Motor neuron (in vitro differentiated cells): ENCODE measurements at regions of chr7 and their contacts with region 1.

Region 1: DNA sequence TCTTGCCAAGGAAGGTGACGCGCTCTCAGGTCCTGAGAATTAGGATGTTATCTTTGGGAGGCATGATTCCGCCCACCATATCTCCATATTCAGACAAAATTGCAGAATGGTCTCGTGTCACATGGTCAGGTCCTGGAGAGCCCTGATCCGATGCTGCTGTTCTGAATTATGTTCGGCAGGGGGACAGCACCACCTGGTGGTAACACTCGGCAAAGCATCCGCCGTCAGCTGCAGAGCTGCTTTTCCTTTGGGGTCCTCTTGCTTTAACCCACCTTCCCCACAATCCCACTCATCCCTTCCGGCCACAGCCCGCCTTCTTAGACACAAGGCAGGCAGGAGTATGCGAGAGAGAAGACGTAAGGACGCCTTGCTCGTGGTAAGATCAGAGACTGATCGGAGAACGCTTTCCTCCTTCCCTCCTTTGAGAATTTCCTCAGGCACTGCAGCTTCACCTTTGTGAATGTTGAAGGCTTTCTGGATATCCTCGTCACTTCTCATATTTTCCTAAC is 327.8 kb upstream of the C7orf33 start:
- ATAC-seq: peak; percentile 86 to 97 (median 92)
- H3K4me3 ChIP-seq: no peak overlapping the region
- H3K27ac ChIP-seq: no peak overlapping the region
- H3K4me1 ChIP-seq: peaks cover 3% of the 10 kb centered on the region in 2 donors

Region 2: DNA sequence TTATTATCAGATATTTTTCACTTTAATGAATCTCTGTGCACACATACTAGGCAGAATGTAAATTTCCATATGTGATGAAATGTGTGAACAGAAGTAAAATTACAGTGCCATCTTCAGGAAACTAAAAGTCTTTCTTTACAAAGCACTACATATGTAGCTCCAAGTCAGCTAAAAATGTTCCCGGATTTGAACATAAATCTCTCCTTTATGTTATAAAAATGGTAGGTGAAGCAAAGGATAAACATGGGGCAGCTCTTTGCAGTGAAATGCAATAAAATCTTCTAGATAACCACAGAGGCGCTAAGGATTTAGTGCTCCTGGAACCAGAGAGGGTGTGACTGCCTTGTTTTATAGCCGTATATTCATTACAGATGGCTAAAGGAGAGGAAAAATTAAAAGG is 222.8 kb after region 1 on chr7:
- in situ Hi-C with region 1: loop called in 3 of 9 experiments (anchors 10 to 25 kb)
- ATAC-seq: peak; percentile 40 to 87 (median 60)
- H3K4me3 ChIP-seq: no peak overlapping the region
- H3K27ac ChIP-seq: no peak overlapping the region
- H3K4me1 ChIP-seq: peaks cover 3 to 22% of the 10 kb centered on the region in 2 donors

Region 3: DNA sequence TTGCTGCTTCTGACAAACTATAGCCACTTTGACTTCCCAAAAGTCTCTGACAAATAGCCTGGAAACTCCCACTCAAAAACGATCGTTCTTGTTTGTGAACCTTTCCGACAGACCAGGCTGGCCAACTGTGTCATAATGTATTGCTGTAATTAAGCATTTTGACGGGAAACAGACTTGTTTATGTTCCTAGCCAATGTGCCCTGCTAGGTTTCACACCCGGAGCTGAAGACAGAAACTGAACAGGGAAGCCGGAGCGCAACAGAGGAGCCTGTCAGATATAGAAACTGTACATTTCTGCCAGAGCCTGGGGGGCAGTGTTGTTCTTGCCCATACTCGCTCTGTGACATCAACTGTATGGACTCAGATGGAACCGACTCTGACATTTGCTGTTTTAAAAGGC is 272.4 kb after region 1 on chr7:
- in situ Hi-C with region 1: no loop called
- ATAC-seq: peak in 2 of 8 experiments; percentile 22 to 43
- H3K4me3 ChIP-seq: no peak overlapping the region
- H3K27ac ChIP-seq: no peak overlapping the region
- H3K4me1 ChIP-seq: no peaks in the 10 kb centered on the region